ENCODE measurements at regions of chr5 and their contacts with region 1.

Region 1: GRCh38 chr5:61658592-61659008 is 326.5 kb downstream of the ZSWIM6 start:
- DNase-seq: peak; percentile 86
- H3K4me3 Mint-ChIP-seq: no peak overlapping the region
- H3K27ac Mint-ChIP-seq: no peak overlapping the region
- H3K4me1 Mint-ChIP-seq: peaks cover 2% of the 10 kb centered on the region
- H3K27me3 Mint-ChIP-seq: peaks cover 8% of the 10 kb centered on the region

Region 2: DNA sequence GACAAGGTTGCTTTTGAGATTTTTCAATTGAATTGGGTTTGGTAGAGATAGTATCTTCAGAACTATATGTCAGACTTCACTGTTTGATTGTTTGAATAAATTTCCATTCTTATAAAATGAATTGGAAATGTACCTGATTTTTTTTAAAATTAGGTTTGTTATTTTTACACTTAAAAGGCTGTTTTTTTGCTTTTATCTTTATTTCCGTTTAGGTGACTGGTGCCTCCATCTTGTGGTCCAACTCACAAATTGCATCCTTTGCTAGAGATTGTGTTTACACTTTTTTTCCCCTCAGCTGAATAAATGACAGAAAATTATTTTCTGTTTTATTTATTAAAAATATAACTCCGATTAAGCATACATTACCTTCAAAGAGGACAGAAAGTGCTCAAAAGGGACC is 698.0 kb before region 1 on chr5:
- CTCF ChIA-PET with region 1: interaction called, 25 read pairs
- POLR2A ChIA-PET with region 1: no interaction called
- intact Hi-C with region 1: loop called (anchors 2 kb)
- DNase-seq: no peak
- H3K4me3 Mint-ChIP-seq: no peak overlapping the region
- H3K27ac Mint-ChIP-seq: no peak overlapping the region
- H3K4me1 Mint-ChIP-seq: peaks cover 4% of the 10 kb centered on the region
- H3K27me3 Mint-ChIP-seq: no peaks in the 10 kb centered on the region

Region 3: DNA sequence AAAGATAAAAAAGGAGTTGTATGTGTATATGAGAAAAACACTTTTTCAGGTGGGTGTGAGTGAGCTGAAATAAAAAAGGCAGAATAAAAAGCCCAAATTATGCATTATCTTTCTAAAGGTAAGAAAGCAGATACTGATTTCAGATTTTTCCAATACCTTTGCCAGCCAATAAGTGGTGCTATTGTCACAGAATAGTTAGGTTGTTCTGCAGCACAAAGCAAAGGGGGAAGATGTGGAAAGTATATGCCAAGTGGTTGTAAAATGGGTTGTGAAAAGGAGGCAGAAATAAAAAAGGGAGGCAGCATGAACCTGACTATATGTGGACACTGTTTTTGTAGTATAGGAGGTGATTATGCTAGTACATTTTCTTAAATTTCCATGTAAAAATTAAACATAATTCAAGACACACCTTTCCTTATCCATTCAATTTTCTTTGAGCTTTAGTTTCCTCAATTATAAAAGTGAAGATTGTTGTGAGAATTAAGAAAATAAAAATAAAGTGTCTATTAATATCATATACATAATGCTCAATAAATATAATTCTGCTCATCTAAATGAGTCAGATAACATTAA is 603.1 kb before region 1 on chr5:
- CTCF ChIA-PET with region 1: interaction called, 29 read pairs
- POLR2A ChIA-PET with region 1: no interaction called
- intact Hi-C with region 1: loop called (anchors 1 kb)
- DNase-seq: no peak
- H3K4me3 Mint-ChIP-seq: no peak overlapping the region
- H3K27ac Mint-ChIP-seq: no peak overlapping the region
- H3K4me1 Mint-ChIP-seq: peaks cover 4% of the 10 kb centered on the region
- H3K27me3 Mint-ChIP-seq: no peaks in the 10 kb centered on the region

Region 4: GRCh38 chr5:61167382-61167781 is 491.2 kb before region 1 on chr5:
- CTCF ChIA-PET with region 1: interaction called, 3 read pairs
- POLR2A ChIA-PET with region 1: no interaction called
- intact Hi-C with region 1: loop called (anchors 2 kb)
- DNase-seq: no peak
- H3K4me3 Mint-ChIP-seq: no peak overlapping the region
- H3K27ac Mint-ChIP-seq: no peak overlapping the region
- H3K4me1 Mint-ChIP-seq: peaks cover 10% of the 10 kb centered on the region
- H3K27me3 Mint-ChIP-seq: no peaks in the 10 kb centered on the region

Region 5: DNA sequence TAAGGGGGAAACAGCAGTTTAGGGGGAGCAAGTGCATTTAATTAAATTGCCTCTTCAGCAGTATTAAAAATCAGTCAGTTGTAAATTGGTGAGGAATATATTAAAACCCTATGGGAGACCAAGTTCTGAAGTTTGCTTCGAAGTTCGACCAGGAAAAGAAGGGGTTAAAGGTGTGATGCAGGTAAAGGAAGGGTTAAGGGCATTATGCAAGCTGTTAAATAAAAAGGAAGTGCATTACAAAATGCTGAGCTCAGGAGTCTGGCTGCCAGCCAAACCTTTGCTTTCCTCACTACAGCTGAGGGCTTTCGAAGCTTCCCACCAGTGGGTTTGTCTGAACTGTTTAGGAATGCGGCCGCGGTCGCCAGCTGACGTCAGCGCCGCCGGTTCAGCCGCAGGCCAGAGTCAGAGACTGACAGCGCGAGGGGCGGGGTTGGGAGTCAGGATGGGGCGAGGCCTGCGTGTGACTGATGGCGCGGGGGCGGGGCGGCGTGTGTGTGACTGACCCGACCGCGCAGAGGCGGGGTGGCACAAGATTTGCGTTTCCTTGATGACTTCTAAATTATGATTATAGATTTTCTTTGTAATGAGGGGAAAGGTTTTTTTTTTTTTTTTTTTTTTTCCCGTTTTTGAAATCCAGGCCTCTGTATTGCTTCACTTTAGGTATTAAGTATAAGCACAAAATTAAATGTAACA is 250.0 kb before region 1 on chr5:
- CTCF ChIA-PET with region 1: no interaction called
- POLR2A ChIA-PET with region 1: no interaction called
- intact Hi-C with region 1: loop called (anchors 1 kb)
- DNase-seq: peak; percentile 98
- H3K4me3 Mint-ChIP-seq: peak overlapping the region; percentile 55
- H3K27ac Mint-ChIP-seq: peak overlapping the region; percentile 50
- H3K4me1 Mint-ChIP-seq: peaks cover 29% of the 10 kb centered on the region
- H3K27me3 Mint-ChIP-seq: no peaks in the 10 kb centered on the region

Region 6: GRCh38 chr5:61647672-61648071 is 10.9 kb before region 1 on chr5:
- CTCF ChIA-PET with region 1: interaction called, 19 read pairs
- POLR2A ChIA-PET with region 1: no interaction called
- intact Hi-C with region 1: no loop called
- DNase-seq: no peak
- H3K4me3 Mint-ChIP-seq: no peak overlapping the region
- H3K27ac Mint-ChIP-seq: no peak overlapping the region
- H3K4me1 Mint-ChIP-seq: no peaks in the 10 kb centered on the region
- H3K27me3 Mint-ChIP-seq: peaks cover 4% of the 10 kb centered on the region

Region 7: DNA sequence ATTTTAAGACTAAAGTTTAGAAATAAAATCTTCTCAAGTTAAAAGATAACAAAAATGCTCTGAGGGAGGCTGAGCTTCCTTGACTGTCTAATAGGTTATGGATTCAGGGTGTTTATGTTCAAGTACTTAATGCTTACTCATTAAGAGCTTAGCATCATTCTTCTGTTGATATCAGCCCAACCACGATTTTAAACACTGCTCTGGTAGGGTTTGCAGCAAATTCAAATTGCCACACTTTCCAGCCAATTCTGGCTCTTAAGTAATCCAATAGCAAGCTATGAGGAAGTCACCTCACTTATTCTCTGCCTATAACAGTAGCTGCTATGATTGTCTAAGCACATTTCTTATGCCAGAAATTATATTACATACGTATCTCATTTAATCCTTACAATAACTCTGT is 456.4 kb after region 1 on chr5:
- CTCF ChIA-PET with region 1: no interaction called
- POLR2A ChIA-PET with region 1: no interaction called
- intact Hi-C with region 1: no loop called
- DNase-seq: no peak
- H3K4me3 Mint-ChIP-seq: no peak overlapping the region
- H3K27ac Mint-ChIP-seq: no peak overlapping the region
- H3K4me1 Mint-ChIP-seq: no peaks in the 10 kb centered on the region
- H3K27me3 Mint-ChIP-seq: peaks cover 4% of the 10 kb centered on the region

Region 8: DNA sequence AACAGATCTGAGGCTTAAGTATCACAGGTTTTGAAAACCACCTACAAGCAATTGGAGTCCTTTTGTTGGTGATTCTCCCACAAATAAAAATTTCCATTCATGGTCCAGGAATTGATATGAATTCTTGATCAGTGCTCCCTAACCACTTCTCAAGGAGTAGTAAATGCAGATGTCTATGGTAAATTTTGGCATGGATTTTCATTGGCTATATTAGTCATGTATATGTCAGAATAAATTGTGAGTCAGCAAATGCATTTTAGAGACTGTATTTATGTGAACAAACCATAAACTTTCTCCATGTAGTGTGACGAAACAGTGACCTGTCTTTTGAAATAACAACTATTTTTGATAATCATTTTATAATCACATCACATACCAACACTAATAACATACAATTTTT is 1692.6 kb after region 1 on chr5:
- CTCF ChIA-PET with region 1: no interaction called
- POLR2A ChIA-PET with region 1: no interaction called
- intact Hi-C with region 1: no loop called
- DNase-seq: no peak
- H3K4me3 Mint-ChIP-seq: no peak overlapping the region
- H3K27ac Mint-ChIP-seq: no peak overlapping the region
- H3K4me1 Mint-ChIP-seq: no peaks in the 10 kb centered on the region
- H3K27me3 Mint-ChIP-seq: no peaks in the 10 kb centered on the region